Natural killer cell (primary cell): ENCODE measurements at regions of chr4 and their contacts with region 1.

Region 1: DNA sequence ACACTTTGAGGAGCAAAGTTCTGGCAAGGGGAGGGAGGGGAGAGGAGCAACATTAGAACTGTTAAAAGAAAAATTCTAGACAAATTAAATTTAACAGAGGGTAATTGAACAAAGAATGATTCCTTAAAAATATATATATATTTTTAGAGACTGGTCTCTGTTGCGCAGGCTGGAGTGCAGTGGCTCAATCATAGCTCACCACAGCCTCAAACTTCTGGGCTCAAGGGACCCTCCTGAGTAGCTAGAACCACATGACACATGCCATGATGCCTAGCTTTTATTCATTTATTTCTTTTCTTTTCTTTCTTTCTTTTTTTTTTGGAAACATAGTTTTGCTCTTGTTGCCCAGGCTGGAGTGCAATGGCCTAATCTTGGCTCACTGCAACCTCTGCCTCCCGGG is 19.1 kb upstream of the SPINK2 start:
- DNase-seq: no peak
- ATAC-seq: no peak
- H3K4me3 ChIP-seq: no peak overlapping the region
- H3K4me3 Mint-ChIP-seq: no peak overlapping the region
- H3K27ac ChIP-seq: no peak overlapping the region
- H3K27ac Mint-ChIP-seq: no peak overlapping the region
- H3K4me1 ChIP-seq: no peaks in the 10 kb centered on the region
- H3K4me1 Mint-ChIP-seq: peaks cover 6% of the 10 kb centered on the region in 2 donors
- H3K27me3 ChIP-seq: no peaks in the 10 kb centered on the region
- H3K27me3 Mint-ChIP-seq: no peaks in the 10 kb centered on the region
- CTCF ChIP-seq: no peak

Region 2: DNA sequence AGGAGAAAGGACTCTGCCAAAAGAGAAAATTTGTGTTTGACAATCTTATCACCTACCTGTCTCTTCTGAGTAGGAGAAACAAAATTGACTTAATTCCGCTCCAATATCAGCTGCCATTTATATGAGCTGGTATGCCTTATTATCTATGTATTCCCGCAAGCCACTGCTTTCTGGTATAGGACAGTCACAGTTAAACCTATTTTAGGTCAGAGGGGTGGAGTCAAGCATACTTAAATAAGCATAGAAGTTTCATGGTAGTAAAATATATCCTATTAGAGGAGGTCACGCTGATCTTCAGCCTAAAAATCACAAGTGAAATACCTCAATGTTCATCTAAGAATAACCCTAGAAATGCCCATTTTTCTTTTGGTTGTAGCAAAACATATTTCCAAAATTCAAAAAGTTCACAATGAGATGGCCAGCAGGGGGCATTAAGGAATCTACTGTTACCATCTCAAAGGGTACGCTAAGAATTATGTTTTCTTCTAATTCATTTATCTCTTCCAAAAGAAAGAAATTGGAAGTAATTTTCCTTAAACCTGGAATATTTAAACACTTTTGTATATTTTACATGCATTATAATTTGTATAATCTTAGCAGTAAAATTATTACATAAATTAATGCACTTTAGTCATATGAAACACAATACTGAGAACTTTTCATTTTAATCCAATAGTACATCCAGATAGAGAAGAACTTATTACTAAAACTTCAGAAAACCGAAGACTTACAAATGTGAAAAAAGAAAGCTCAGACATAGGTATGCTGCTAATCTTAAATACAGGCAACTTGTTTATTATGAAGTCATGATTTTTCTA is 415.7 kb before region 1 on chr4:
- intact Hi-C with region 1: loop called (anchors 1 kb)
- DNase-seq: peak in 1 of 2 donors; percentile 77
- ATAC-seq: peak in 2 of 3 donors; percentile 45 to 58
- H3K4me3 ChIP-seq: no peak overlapping the region
- H3K4me3 Mint-ChIP-seq: no peak overlapping the region
- H3K27ac ChIP-seq: no peak overlapping the region
- H3K27ac Mint-ChIP-seq: no peak overlapping the region
- H3K4me1 ChIP-seq: no peaks in the 10 kb centered on the region
- H3K4me1 Mint-ChIP-seq: no peaks in the 10 kb centered on the region
- H3K27me3 ChIP-seq: no peaks in the 10 kb centered on the region
- H3K27me3 Mint-ChIP-seq: no peaks in the 10 kb centered on the region
- CTCF ChIP-seq: peak; percentile 77

Region 3: DNA sequence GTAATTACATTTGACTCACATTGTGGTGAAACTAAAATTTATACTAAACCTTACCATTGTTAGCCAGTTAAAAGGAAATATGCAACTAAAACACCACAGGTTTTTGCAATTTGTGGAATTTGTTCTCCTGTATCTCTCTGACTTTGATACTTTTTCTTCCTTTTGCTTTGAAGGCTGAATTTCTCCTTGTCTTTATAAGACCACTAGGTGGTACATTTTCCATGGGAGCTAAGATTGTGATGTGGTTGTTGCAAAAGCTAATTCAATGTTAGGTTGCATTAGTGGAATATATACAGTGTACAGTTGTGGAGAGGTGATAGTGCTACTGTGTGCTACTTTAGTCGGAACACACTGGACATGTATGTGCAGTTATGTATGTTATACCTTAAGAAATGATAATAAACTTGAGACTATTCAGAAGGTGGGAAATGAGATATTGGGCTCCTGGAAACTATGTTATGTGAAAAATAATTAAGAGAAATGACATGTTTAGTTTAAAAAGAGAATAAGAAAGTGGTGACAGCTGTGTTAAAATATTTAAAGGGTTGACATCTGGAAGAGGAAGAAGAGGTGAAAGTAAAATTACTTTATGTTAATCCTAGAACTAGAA is 264.6 kb before region 1 on chr4:
- intact Hi-C with region 1: loop called (anchors 1 kb)
- DNase-seq: peak in 1 of 2 donors; percentile 48
- ATAC-seq: peak in 2 of 3 donors; percentile 49 to 59
- H3K4me3 ChIP-seq: no peak overlapping the region
- H3K4me3 Mint-ChIP-seq: no peak overlapping the region
- H3K27ac ChIP-seq: no peak overlapping the region
- H3K27ac Mint-ChIP-seq: no peak overlapping the region
- H3K4me1 ChIP-seq: no peaks in the 10 kb centered on the region
- H3K4me1 Mint-ChIP-seq: peaks cover 7 to 8% of the 10 kb centered on the region in 2 donors
- H3K27me3 ChIP-seq: no peaks in the 10 kb centered on the region
- H3K27me3 Mint-ChIP-seq: no peaks in the 10 kb centered on the region
- CTCF ChIP-seq: peak; percentile 57